Naive thymus-derived CD8-positive, alpha-beta T cell (primary cell): ENCODE measurements at regions of chr2 and their contacts with region 1.

Region 1: GRCh38 chr2:73233154-73233931 is at the start of gene PRADC1:
- DNase-seq: peak; percentile 78 to 98 (median 93)
- ATAC-seq: peak; percentile 80 to 85
- H3K4me3 Mint-ChIP-seq: peak within 1 kb of the TSS; percentile 90 to 99 (median 97)
- H3K27ac Mint-ChIP-seq: peak within 1 kb of the TSS; percentile 91 to 98 (median 97)
- H3K4me1 Mint-ChIP-seq: peaks cover 25 to 51% (median 39%) of the 10 kb centered on the region in 4 donors
- H3K27me3 Mint-ChIP-seq: no peaks in the 10 kb centered on the region
- polyA plus RNA-seq, gene PRADC1: 26.1 to 38.8 (median 27.6) TPM

Region 2: DNA sequence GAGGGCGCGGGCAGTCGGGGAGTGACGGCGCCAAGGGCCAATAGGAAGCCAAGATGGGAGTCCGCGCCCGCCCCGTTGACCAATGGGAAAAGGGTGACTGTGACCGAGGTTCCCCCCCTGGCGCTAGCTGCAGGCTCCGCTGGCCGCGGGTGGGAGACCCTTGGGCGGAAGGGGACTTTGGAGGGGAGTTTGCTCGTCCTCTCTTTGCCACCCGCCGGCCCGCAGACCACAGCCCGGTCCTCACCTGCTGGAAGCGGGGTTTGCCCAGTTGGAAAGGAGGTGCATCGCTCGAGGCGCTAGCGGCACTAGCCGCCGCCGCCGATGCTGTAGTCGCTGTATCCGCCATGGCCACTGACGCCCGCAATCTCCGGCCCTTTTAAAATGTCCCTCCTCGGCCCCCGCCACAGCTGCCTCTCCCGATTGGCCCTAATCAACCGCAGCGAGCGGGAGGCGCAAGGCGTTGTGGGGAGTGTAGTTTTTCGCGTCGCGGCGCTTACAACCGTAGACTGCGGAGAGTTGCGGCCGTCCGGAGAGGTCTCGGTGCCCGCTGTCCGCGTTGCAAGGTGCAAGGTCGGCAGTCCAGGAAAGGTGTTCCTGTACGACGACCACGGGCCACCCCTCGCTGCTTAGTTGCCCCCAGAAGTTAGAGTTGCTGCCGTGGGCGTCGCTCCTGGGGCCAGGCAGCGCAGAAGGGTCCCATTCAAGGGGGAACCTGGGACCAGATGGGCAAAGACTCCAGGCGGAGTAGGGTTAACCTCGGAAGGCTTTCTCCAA is 161.8 kb before region 1 on chr2 and contains the start of gene SFXN5:
- POLR2A ChIA-PET with region 1: interaction called, 20 read pairs
- DNase-seq: peak; percentile 84 to 99 (median 92)
- ATAC-seq: peak; percentile 85 to 86
- H3K4me3 Mint-ChIP-seq: peak within 1 kb of the TSS; percentile 91 to 98 (median 94)
- H3K27ac Mint-ChIP-seq: peak within 1 kb of the TSS; percentile 88 to 97 (median 94)
- H3K4me1 Mint-ChIP-seq: peaks cover 22 to 45% (median 35%) of the 10 kb centered on the region in 4 donors
- H3K27me3 Mint-ChIP-seq: no peaks in the 10 kb centered on the region
- polyA plus RNA-seq, gene SFXN5: 1.7 to 3.5 (median 2.6) TPM

Region 3: DNA sequence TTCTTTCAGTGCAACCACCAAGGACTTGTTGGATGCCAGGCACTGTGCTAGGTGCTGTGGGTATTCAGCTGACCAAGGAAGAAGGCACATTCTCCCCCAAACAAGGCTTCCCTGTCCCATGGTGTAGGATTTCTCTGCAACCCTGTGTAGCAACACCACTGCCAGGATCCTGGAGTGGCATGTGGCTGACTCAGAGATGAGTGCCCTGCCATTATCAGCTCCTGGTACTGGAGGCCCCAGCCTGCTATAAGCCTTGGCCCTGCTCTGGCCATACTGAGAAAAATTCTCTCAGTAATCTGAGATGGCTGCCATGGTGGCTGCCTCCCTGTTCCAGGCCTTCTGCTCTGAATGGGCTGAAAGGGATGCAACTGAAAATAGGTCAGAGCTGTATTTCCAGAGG is 15.0 kb before region 1 on chr2:
- POLR2A ChIA-PET with region 1: interaction called, 29 read pairs
- DNase-seq: no peak
- ATAC-seq: no peak
- H3K4me3 Mint-ChIP-seq: no peak overlapping the region
- H3K27ac Mint-ChIP-seq: no peak overlapping the region
- H3K4me1 Mint-ChIP-seq: peaks cover 15 to 30% (median 25%) of the 10 kb centered on the region in 4 donors
- H3K27me3 Mint-ChIP-seq: no peaks in the 10 kb centered on the region

Region 4: GRCh38 chr2:73284296-73285158 is 51.2 kb after region 1 on chr2 and contains the start of gene FBXO41:
- POLR2A ChIA-PET with region 1: interaction called, 30 read pairs
- DNase-seq: peak; percentile 59 to 86 (median 68)
- ATAC-seq: peak; percentile 83 to 86
- H3K4me3 Mint-ChIP-seq: peak within 1 kb of the TSS; percentile 60 to 95 (median 89)
- H3K27ac Mint-ChIP-seq: peak within 1 kb of the TSS in 9 of 10 donors; percentile 50 to 93 (median 83)
- H3K4me1 Mint-ChIP-seq: peaks cover 19 to 34% (median 31%) of the 10 kb centered on the region in 4 donors
- H3K27me3 Mint-ChIP-seq: peaks cover 3 to 17% (median 7%) of the 10 kb centered on the region in 5 donors
- polyA plus RNA-seq, gene FBXO41: 1.0 to 2.7 (median 1.8) TPM

Region 5: GRCh38 chr2:73385595-73386341 is 152.4 kb after region 1 on chr2 and contains the start of gene ALMS1:
- POLR2A ChIA-PET with region 1: interaction called, 37 read pairs
- DNase-seq: peak; percentile 81 to 93 (median 87)
- ATAC-seq: peak; percentile 81 to 90
- H3K4me3 Mint-ChIP-seq: peak within 1 kb of the TSS; percentile 85 to 95 (median 90)
- H3K27ac Mint-ChIP-seq: peak within 1 kb of the TSS; percentile 93 to 98 (median 96)
- H3K4me1 Mint-ChIP-seq: peaks cover 23 to 48% (median 33%) of the 10 kb centered on the region in 4 donors
- H3K27me3 Mint-ChIP-seq: peaks cover 0 to 6% (median 0%) of the 10 kb centered on the region in 5 donors
- polyA plus RNA-seq, gene ALMS1: 1.9 to 5.1 (median 2.2) TPM